GM10248 (cell line): ENCODE measurements at regions of chr6 and their contacts with region 1.

Region 1: GRCh38 chr6:31580807-31581433 is 1.3 kb downstream of the LTB start:
- DNase-seq: peak; percentile 87
- CTCF ChIP-seq: peak; percentile 89

Region 2: DNA sequence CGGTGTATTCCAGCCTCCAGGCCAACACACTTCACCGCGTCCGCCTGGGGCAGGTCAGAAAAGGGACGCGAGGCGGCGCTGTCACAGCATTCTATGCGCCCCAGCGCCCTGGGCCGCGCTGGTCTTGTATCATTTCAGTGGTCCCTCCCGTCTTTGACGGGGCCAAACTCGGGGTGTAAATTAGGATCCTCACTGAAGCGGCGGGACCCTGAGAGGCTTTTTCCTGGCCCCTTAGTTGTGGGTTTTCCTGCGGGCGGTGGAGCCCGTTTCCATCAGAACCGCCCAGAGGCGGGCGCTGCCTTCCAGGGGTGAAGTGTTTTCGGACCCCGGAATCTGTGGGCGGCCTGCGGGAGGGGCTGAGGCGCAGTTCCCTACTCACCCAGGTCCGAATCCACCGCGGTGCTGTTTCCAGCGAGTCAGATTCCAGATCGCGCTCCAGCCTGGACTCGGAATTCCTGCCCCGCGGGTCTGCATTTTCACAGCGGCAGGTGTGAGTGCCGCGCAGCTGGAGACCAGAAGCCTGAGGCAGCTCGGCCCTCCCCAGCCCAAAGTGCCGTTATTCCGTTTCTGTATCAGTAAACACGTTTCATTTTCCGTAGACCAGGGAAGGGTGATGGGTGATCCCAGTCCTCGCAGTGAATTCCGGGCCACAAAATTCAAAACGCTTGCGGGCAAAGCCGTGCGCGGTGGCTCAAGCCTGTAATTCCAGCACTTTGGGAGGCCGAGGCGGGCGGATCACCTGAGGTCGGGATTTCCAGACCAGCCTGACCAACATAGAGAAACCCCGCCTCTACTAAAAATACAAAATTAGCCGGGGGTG is 86.8 kb before region 1 on chr6:
- CTCF ChIA-PET with region 1: interaction called, 10 read pairs
- POLR2A ChIA-PET with region 1: interaction called, 3 read pairs
- DNase-seq: peak; percentile 64
- CTCF ChIP-seq: peak; percentile 92

Region 3: DNA sequence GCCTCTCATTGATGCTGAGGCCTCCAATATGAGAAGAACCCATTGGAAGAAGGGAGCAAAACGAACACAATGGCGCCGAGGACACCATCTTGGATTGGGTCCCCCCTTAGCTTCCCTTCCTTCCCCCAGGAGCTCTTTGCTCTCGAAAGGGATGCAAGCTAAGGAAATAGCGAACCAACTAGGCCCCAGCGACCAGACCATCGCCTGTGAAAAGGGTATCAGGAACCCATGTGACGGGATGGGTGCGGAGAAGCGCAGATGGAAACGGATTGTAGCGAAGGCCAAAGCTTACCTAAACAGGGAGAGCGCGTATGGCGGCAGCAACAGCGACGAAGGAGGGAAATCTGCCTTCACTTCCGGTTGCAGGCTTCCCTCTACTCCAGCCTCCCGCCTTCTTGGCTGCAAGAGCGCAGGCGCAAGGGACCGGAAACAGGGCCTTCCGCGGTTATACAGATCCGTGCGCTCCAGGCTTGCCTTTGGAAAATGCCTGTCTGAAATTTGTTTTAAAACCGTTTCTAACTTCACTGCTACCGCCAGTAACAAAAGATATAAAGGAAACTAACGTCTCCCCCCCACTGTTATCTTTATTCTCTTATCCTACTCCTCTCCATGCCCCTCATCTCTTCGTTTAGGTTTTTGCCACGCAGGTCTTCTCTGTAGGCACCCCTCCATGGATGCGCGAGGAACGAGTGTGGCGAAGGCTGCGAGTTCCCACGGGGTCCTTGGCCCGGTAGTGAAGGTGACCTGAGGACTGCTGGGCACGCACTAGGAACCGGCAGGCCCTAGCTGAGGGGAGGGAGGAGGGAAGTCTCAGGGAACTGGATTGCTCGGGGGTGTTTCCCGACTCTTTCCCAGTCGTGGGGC is 39.0 kb before region 1 on chr6 and contains the start of gene DDX39B:
- CTCF ChIA-PET with region 1: interaction called, 2,725 read pairs
- POLR2A ChIA-PET with region 1: interaction called, 86 read pairs
- DNase-seq: peak; percentile 92
- CTCF ChIP-seq: no peak

Region 4: GRCh38 chr6:31615748-31616147 is 34.8 kb after region 1 on chr6:
- CTCF ChIA-PET with region 1: interaction called, 2,725 read pairs
- POLR2A ChIA-PET with region 1: interaction called, 5 read pairs
- DNase-seq: no peak
- CTCF ChIP-seq: no peak

Region 5: DNA sequence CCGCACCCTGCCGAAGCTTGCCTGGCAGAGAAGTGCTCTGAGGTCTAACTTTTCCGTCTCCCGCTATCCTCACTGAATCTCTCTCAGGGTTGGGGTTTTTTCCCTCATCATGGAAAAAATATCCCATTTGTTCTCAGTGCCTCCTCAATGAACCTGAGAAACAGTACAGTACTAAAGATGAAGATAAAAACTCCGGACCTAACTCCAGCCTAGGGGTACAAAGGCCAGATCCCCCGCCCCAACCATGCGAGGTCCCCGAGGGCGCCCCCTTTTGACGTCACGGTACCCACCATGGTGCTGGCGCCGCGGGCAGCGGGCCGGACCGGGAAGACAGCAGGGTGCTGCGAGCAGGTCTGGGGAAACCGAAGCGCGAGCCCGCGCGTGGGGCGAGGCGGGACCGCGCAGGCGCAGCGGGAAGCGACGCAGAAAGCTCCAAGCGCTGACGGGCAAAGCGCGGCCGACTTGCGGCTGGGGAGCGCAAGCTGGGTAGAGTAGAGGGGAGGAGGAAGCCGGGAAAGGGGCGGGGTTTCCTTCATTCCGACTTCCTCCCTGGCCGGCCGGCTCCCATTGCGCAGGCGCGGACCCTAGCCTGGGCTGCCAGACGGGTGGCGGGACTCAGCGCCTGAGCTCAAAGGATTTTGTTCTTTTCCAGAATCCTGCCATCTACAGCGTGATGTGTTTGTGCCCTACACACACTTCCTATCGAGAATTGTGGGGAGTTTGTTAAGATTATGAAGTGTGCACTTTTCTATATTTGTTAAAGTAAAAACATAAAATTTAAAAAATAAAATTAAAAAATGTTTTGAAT is 225.7 kb after region 1 on chr6 and contains the start of gene LSM2:
- CTCF ChIA-PET with region 1: no interaction called
- POLR2A ChIA-PET with region 1: no interaction called
- DNase-seq: peak; percentile 100
- CTCF ChIP-seq: peak; percentile 39